ENCODE measurements at regions of chr22 and their contacts with region 1.

Region 1: DNA sequence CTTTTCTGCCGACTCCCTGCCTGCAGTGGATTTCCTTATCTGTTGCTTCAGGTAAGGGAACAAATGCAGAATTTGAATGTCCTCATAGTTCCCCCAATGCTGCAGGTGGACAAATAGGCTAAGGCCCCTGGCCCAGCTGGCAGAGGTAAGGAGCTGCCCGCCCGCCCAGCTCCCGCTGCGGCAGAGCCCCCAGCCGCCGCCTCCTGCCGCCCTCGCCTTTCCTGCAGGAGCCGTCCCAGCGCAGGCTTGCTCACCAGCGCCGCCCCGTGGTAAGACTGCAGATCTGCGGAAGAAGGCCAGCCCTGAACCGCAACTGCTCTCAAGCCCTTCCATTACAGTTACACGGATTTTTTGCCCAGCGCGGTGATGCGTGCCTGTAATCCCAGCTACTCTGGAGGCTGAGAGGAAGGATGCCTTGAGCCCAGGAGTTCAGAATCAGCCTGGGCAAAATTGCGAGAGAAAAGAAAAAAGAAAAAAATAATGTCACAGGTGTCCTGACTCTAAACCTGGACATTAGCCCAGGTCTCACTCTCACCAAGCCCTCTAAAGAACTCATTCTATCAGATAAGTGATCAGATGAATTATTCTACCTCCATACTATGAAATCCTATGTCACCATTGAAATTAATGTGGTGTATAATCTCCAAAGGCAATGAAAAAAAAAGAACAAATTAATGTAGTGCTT is 51.2 kb upstream of the EMID1 start:
- DNase-seq: peak; percentile 85
- ATAC-seq: peak; percentile 83

Region 2: GRCh38 chr22:29072193-29072978 is 82.1 kb before region 1 on chr22:
- intact Hi-C with region 1: loop called (anchors 10 kb)
- DNase-seq: peak; percentile 93
- ATAC-seq: peak; percentile 95

Measured in Right ventricle myocardium superior (tissue), 1 donor.